Transverse colon (tissue), 4 donors: ENCODE measurements at regions of chr16 and their contacts with region 1.

Region 1: GRCh38 chr16:49407873-49408550 is 34.4 kb downstream of the C16orf78 start:
- DNase-seq: peak; percentile 91
- H3K4me3 ChIP-seq: no peak overlapping the region
- H3K27ac ChIP-seq: no peak overlapping the region
- H3K4me1 ChIP-seq: peaks cover 0 to 6% (median 2%) of the 10 kb centered on the region in 4 donors
- H3K27me3 ChIP-seq: no peaks in the 10 kb centered on the region
- CTCF ChIP-seq: peak; percentile 81 to 94 (median 89)
- EP300 ChIP-seq: no peak
- POLR2A ChIP-seq: no peak

Region 2: DNA sequence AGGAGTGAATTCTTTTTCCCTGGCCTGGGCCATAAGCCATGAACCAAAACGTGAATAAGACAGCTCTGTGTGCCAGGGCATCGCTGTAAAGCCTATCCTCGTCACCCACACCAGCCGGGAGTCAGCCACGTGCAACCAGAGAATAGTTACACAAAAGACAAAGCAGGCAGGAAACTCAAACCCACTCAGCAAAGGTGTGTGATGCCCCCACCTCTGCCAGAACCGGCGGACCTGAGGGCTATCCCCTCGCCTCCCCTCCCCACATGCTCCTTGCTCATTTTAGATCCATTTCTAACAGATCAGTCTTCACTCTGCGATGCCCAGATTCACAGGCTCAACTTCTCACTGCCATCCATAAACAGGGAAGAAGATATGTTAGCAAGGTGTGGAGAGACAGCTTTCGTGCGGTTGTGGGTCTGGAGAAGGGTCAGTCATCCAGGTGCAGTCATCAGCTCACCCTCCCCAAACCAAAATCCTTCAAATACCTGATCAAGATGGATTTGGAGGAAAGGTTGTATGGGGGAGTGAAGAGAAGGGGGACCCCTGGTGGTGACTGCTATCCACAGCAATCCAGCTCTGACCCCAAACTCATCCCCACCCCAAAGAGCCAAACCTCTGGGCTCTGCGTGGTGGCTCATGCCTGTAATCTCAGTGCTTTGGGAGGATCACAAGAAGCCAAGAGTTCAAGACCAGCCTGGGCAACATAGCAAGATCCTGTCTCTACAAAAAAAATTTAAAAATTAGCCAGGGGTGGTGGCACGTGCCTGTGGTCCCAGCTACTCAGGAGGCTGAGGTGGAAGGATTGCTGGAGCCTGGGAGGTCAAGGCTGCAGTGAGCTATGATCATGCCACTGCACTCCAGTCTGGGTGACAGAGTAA is 184.8 kb after region 1 on chr16:
- in situ Hi-C with region 1: loop called in 1 of 4 experiments (anchors 25 kb)
- intact Hi-C with region 1: loop called (anchors 2 kb)
- DNase-seq: peak; percentile 25
- H3K4me3 ChIP-seq: no peak overlapping the region
- H3K27ac ChIP-seq: no peak overlapping the region
- H3K4me1 ChIP-seq: peaks cover 0 to 19% (median 7%) of the 10 kb centered on the region in 4 donors
- H3K27me3 ChIP-seq: no peaks in the 10 kb centered on the region
- CTCF ChIP-seq: peak; percentile 61 to 70 (median 66)
- EP300 ChIP-seq: no peak
- POLR2A ChIP-seq: no peak

Region 3: GRCh38 chr16:49921791-49922456 is 513.9 kb after region 1 on chr16:
- in situ Hi-C with region 1: loop called (anchors 10 to 25 kb)
- intact Hi-C with region 1: loop called (anchors 5 kb)
- DNase-seq: peak; percentile 80
- H3K4me3 ChIP-seq: no peak overlapping the region
- H3K27ac ChIP-seq: no peak overlapping the region
- H3K4me1 ChIP-seq: no peaks in the 10 kb centered on the region
- H3K27me3 ChIP-seq: no peaks in the 10 kb centered on the region
- CTCF ChIP-seq: peak; percentile 51 to 81 (median 62)
- EP300 ChIP-seq: no peak
- POLR2A ChIP-seq: no peak